PC-3 (cell line): ENCODE measurements at regions of chr13 and their contacts with region 1.

Region 1: DNA sequence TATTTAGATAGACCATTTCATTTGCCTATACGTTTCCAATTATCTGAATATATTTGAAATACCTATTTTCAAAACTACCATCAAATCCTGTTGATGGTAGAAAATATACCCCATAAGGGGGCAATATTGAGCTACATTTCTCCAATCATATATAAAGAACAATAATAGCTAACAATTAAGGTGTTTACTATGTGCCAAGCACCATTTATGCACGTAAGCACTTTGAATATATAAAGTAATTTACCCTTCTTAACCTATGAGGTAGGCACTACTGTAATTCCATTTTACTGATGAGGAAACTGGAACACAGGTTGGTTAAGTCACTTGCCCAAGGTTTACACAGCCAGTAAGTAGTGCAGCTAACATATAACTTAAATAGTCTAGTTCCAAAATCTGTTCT is 79.2 kb downstream of the UBL3 start:
- DNase-seq: peak; percentile 70
- ATAC-seq: peak; percentile 50
- H3K4me3 ChIP-seq: no peak overlapping the region
- H3K27ac ChIP-seq: no peak overlapping the region
- H3K4me1 ChIP-seq: no peaks in the 10 kb centered on the region
- H3K27me3 ChIP-seq: no peaks in the 10 kb centered on the region
- CTCF ChIP-seq: peak; percentile 73

Region 2: GRCh38 chr13:29850224-29850898 is 79.1 kb after region 1 on chr13 and contains the start of gene UBL3:
- CTCF ChIA-PET with region 1: interaction called, 6 read pairs
- POLR2A ChIA-PET with region 1: no interaction called
- intact Hi-C with region 1: loop called (anchors 1 kb)
- DNase-seq: peak; percentile 93
- ATAC-seq: peak; percentile 72
- H3K4me3 ChIP-seq: peak within 1 kb of the TSS; percentile 94
- H3K27ac ChIP-seq: peak within 1 kb of the TSS; percentile 82
- H3K4me1 ChIP-seq: peaks cover 40% of the 10 kb centered on the region
- H3K27me3 ChIP-seq: no peaks in the 10 kb centered on the region
- CTCF ChIP-seq: no peak
- total RNA-seq, gene UBL3: 10.9 and 13.9 TPM in 2 replicates